SK-N-SH (cell line): ENCODE measurements at regions of chr1 and their contacts with region 1.

Region 1: GRCh38 chr1:160006312-160006940 is 25.4 kb downstream of the PIGM start:
- DNase-seq: peak; percentile 73
- H3K4me3 ChIP-seq: no peak overlapping the region; a peak in 1 of 4 replicates
- H3K27ac ChIP-seq: no peak overlapping the region
- H3K4me1 ChIP-seq: no peaks in the 10 kb centered on the region
- H3K27me3 ChIP-seq: peaks cover 8% of the 10 kb centered on the region; the same call in 1 of the 2 replicates
- CTCF ChIP-seq: peak; percentile 98
- EP300 ChIP-seq: no peak
- RAD21 ChIP-seq: peak; percentile 66

Region 2: GRCh38 chr1:159719990-159720389 is 286.4 kb before region 1 on chr1:
- CTCF ChIA-PET with region 1: no interaction called
- POLR2A ChIA-PET with region 1: no interaction called
- DNase-seq: no peak
- H3K4me3 ChIP-seq: no peak overlapping the region
- H3K27ac ChIP-seq: no peak overlapping the region
- H3K4me1 ChIP-seq: no peaks in the 10 kb centered on the region
- H3K27me3 ChIP-seq: no peaks in the 10 kb centered on the region
- CTCF ChIP-seq: no peak
- EP300 ChIP-seq: no peak
- RAD21 ChIP-seq: no peak

Region 3: GRCh38 chr1:159798893-159799292 is 207.5 kb before region 1 on chr1:
- CTCF ChIA-PET with region 1: interaction called, 40 read pairs
- POLR2A ChIA-PET with region 1: no interaction called
- DNase-seq: peak; percentile 72
- H3K4me3 ChIP-seq: no peak overlapping the region
- H3K27ac ChIP-seq: no peak overlapping the region
- H3K4me1 ChIP-seq: no peaks in the 10 kb centered on the region
- H3K27me3 ChIP-seq: peaks cover 10% of the 10 kb centered on the region; the same call in 1 of the 2 replicates
- CTCF ChIP-seq: peak; percentile 87
- EP300 ChIP-seq: no peak
- RAD21 ChIP-seq: peak; percentile 88

Region 4: GRCh38 chr1:159891275-159892157 is 114.9 kb before region 1 on chr1:
- CTCF ChIA-PET with region 1: interaction called, 51 read pairs
- POLR2A ChIA-PET with region 1: no interaction called
- DNase-seq: peak; percentile 87
- H3K4me3 ChIP-seq: no peak overlapping the region; a peak in 1 of 4 replicates
- H3K27ac ChIP-seq: peak overlapping the region in 1 of 2 experiments; percentile 94; a peak in 2 of 4 replicates
- H3K4me1 ChIP-seq: peaks cover 13 to 29% of the 10 kb centered on the region in 2 experiments
- H3K27me3 ChIP-seq: no peaks in the 10 kb centered on the region
- CTCF ChIP-seq: peak; percentile 100
- EP300 ChIP-seq: no peak
- RAD21 ChIP-seq: peak; percentile 100

Region 5: DNA sequence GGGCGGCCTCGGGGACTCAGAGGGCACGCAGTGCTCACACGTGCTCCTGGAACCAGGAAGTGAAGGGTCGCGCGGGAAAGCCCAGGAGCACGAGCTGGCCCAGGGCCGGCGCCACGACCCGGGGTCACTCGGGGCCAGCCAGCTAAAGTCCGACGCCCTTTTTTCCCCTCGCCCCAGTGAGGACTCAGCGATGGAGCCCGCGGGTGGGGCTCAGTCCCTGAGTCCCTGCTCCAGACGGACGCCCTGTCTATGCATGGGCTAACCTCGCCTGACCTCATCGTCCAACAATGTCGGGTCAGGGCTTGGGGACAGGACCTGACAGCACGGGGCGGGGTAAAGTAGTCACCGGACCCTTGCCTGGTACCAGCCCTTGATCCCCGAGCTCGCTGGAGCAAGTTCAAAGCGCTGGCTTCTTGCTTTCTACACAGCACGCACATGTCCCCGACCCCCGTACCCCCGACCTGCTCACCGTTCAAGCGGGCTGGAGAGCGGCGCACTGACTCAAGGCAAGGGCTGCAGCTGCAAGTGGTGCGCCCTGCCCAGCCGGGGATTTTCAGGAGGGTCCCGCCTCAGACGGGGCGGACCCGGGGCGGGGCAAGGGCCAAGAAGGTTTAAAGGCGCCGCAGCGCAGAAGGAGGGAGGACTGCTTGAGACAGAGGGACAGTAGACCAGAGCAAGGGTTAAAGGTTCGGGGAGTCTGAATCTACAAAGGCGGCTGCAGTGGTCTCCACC is 81.3 kb before region 1 on chr1 and contains the start of gene TAGLN2:
- CTCF ChIA-PET with region 1: interaction called, 460 read pairs
- POLR2A ChIA-PET with region 1: no interaction called
- DNase-seq: peak; percentile 93
- H3K4me3 ChIP-seq: peak within 1 kb of the TSS; percentile 91 to 97
- H3K27ac ChIP-seq: peak within 1 kb of the TSS; percentile 73 to 97; a peak in 3 of 4 replicates
- H3K4me1 ChIP-seq: peaks cover 18 to 35% of the 10 kb centered on the region in 2 experiments; a peak in 2 of 4 replicates
- H3K27me3 ChIP-seq: no peaks in the 10 kb centered on the region
- CTCF ChIP-seq: no peak
- EP300 ChIP-seq: no peak
- RAD21 ChIP-seq: no peak
- polyA plus RNA-seq, gene TAGLN2: 625 and 646 TPM in 2 replicates

Region 6: DNA sequence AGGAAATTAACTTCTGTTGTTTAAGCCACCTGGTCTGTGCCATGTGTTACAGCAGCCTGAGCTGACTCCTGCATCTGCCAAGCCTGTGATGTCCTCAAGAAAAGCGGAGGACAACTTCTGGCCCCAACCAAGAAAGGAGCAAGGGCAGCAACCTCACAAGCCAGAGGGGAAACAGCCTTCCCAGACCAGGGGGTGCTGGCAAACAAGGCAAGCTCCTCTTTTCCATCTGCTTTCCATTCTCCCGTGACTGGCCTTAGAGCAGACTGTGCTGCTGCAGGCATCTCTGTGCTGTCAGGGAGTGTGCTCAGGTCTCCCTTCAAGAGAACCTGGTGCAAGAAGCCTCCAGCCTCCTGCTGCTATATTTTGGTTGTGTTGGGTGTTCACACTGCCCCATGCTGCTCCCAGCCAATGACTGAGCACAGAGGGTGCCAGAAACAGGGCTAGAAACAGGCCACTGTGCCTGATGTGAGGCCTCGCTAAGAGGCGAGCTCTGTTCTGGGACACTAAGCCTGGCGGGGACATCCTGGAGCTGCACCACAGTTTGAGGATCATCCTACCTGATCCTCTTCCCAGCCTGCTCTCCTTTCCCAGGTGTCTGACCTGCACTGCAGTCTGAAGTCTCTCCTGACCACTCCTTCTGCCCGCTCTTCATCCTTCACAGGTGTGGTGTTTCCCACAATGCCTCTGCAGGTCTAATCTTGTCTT is 24.9 kb before region 1 on chr1:
- CTCF ChIA-PET with region 1: interaction called, 41 read pairs
- POLR2A ChIA-PET with region 1: no interaction called
- DNase-seq: no peak
- H3K4me3 ChIP-seq: no peak overlapping the region
- H3K27ac ChIP-seq: no peak overlapping the region
- H3K4me1 ChIP-seq: no peaks in the 10 kb centered on the region
- H3K27me3 ChIP-seq: peaks cover 46% of the 10 kb centered on the region; the same call in 1 of the 2 replicates
- CTCF ChIP-seq: no peak
- EP300 ChIP-seq: no peak
- RAD21 ChIP-seq: no peak

Region 7: DNA sequence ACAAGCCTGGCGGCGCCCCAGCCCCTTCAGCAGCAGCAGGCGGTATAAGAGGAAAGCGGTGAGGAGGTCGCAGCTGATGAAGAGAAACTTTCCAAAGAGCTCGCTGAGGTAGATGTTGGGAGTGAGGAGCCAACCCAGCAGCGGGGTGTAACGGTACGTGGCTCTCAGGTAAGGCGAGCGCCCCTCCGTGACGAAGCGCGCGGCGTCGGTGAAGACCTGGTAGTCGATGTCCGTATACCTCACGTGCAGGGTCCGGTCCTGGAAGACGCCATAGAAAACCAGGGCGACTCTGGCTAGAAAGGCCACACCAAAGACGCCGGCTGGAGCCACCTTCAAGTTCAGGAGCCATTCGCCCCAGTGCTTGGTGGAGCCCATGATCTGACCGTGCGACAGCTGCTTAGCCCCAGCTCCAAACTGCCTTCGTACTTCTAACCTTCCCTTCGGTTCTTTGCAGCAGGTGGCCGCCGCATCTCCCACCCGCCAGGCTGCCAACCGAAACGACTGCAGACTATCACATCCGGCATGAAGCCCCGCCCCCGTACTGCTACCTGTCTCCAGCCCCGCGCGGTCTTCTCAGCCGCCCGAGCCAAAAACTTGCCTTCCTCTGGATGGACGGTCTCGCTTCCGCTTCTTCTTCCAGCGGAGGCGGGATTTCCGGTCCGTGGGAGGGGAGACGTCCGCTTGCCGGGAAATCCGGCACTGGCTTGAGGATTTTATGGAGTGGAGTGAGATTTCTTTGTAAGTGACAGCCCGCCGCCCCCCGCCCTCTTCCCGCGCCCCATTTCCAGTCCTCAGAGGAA is 25.1 kb after region 1 on chr1 and contains the start of gene PIGM:
- CTCF ChIA-PET with region 1: interaction called, 47 read pairs
- POLR2A ChIA-PET with region 1: interaction called, 3 read pairs
- DNase-seq: peak; percentile 89
- H3K4me3 ChIP-seq: peak within 1 kb of the TSS; percentile 84 to 93
- H3K27ac ChIP-seq: peak within 1 kb of the TSS in 1 of 2 experiments; percentile 82; a peak in 2 of 4 replicates
- H3K4me1 ChIP-seq: peaks cover 0 to 15% of the 10 kb centered on the region in 2 experiments; a peak in 2 of 4 replicates
- H3K27me3 ChIP-seq: peaks cover 5% of the 10 kb centered on the region; the same call in 1 of the 2 replicates
- CTCF ChIP-seq: no peak
- EP300 ChIP-seq: no peak
- RAD21 ChIP-seq: no peak
- polyA plus RNA-seq, gene PIGM: 4.0 and 5.1 TPM in 2 replicates